ENCODE measurements at regions of chr17 and their contacts with region 1.

Region 1: GRCh38 chr17:76141212-76142038 is at the start of gene FOXJ1:
- DNase-seq: peak; percentile 92
- ATAC-seq: peak; percentile 67
- H3K4me3 Mint-ChIP-seq: peak within 1 kb of the TSS; percentile 72
- H3K27ac Mint-ChIP-seq: peak within 1 kb of the TSS; percentile 46
- H3K4me1 Mint-ChIP-seq: peaks cover 57% of the 10 kb centered on the region
- H3K27me3 Mint-ChIP-seq: peaks cover 1% of the 10 kb centered on the region
- CTCF ChIP-seq: no peak
- total RNA-seq, gene FOXJ1: 11.1 to 11.6 TPM

Region 2: GRCh38 chr17:76153640-76154039 is 12.2 kb after region 1 on chr17:
- CTCF ChIA-PET with region 1: interaction called, 5 read pairs
- POLR2A ChIA-PET with region 1: interaction called, 17 read pairs
- intact Hi-C with region 1: no loop called
- DNase-seq: no peak
- ATAC-seq: no peak
- H3K4me3 Mint-ChIP-seq: no peak overlapping the region
- H3K27ac Mint-ChIP-seq: peak overlapping the region; percentile 78
- H3K4me1 Mint-ChIP-seq: peaks cover 47% of the 10 kb centered on the region
- H3K27me3 Mint-ChIP-seq: no peaks in the 10 kb centered on the region
- CTCF ChIP-seq: no peak

Measured in activated CD8-positive, alpha-beta T cell treated with anti-CD3 and anti-CD28 coated beads for 36 hours (primary cell).